PC-9 (cell line): ENCODE measurements at regions of chr9 and their contacts with region 1.

Region 1: DNA sequence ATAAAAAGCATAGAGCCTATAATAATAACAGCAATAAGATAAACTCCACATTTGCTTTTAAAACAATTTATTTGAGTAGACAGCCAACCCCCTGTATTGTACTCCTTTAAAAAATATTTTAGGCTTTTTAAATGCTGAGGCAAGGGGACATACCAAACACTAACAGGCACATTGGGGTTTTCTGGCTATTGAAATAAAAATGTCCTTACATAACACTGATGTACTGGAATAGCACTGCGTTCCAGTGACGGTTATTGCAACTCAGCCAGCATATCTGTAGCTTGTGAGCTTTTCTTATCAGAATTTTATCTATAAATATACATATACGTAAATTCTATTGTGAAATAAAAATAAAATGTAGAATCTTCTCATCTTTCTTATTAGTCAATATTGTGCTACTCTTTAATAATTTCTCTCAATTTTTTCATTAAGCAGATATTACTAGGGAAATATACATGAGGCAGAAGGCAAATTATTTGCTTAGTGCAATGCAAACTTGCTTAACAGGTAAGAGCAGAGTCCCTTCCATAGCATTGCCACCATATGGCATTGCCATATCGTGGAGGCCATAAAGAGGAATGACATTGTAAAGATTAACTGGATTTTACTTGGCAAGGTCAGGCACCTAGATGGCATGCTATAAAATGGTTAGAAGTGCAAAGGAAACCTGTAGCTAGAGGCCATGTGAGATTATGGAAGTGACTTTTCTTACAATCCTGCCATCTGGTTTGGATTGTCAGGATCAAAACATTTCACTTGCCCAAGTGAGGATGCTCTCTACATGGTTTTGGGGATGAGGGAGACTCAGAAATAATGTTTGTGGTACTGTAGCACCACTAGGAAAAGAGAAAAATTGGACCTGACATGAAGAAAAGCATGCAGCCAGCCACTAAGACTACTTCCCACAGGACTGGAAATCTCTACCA is 94.8 kb upstream of the CDKN2B start:
- DNase-seq: peak in 1 of 2 experiments; percentile 51
- H3K4me3 ChIP-seq: peak overlapping the region; percentile 18; the same call in 1 of the 2 replicates
- H3K27ac ChIP-seq: peak overlapping the region; percentile 94
- H3K4me1 ChIP-seq: peaks cover 53% of the 10 kb centered on the region
- H3K27me3 ChIP-seq: no peaks in the 10 kb centered on the region
- CTCF ChIP-seq: no peak

Region 2: GRCh38 chr9:21481470-21482056 is 622.4 kb before region 1 on chr9:
- CTCF ChIA-PET with region 1: no interaction called
- POLR2A ChIA-PET with region 1: no interaction called
- intact Hi-C with region 1: no loop called
- DNase-seq: no peak
- H3K4me3 ChIP-seq: no peak overlapping the region
- H3K27ac ChIP-seq: no peak overlapping the region
- H3K4me1 ChIP-seq: no peaks in the 10 kb centered on the region
- H3K27me3 ChIP-seq: no peaks in the 10 kb centered on the region
- CTCF ChIP-seq: no peak

Region 3: GRCh38 chr9:22158927-22159346 is 55.0 kb after region 1 on chr9:
- CTCF ChIA-PET with region 1: no interaction called
- POLR2A ChIA-PET with region 1: no interaction called
- intact Hi-C with region 1: loop called (anchors 5 kb)
- DNase-seq: peak; percentile 41 to 96
- H3K4me3 ChIP-seq: no peak overlapping the region
- H3K27ac ChIP-seq: peak overlapping the region; percentile 99
- H3K4me1 ChIP-seq: peaks cover 47% of the 10 kb centered on the region
- H3K27me3 ChIP-seq: no peaks in the 10 kb centered on the region
- CTCF ChIP-seq: no peak